Activated T-helper 1 cell treated with anti-CD3 and anti-CD28 coated beads, Interleukin-12 subunit alpha, Interleukin-12 subunit beta, Interleukin-2, Interleukin-4 antibody, amounts not matched to agents 30 ng/mL and 10 ng/mL and 1 ng/mL, durations not matched to agents 14 hours and 24 hours and 36 hours (primary cell): ENCODE measurements at regions of chr12 and their contacts with region 1.

Region 1: DNA sequence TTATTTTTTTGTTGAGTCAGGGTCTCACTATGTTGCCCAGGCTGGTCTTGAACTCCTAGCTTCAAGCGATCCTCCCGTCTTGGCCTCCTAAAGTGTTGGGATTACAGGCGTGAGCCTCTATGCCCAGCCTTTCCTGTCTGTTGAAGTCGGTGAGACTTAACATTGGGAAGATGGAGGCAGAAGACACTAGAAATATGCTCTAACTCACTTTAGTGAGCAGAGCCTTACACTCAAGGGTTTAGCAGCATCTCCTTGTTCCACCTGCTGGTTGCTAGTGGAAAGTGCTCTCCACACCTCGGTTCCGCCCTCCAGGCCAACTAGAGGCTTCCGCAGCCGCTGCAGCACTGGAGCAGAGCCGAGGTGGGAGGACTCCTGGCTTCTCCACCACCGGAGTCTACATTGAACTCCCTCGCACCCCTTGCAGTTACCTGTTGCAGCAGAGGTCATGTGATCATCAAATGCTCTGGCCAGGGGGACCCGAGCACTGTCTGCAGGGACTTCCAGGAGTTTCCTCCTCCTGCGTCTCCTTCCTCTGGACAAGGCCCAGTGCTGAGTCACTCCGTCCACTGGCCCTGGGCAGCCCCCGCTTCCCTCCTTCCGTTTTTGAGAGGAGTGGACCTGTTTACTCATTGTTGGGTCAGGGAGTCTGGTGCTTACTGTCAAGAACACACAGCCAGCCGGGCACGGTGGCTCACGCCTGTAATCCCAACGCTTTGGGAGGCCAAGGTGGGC is 9.4 kb upstream of the HVCN1 start:
- DNase-seq: peak; percentile 78
- H3K4me3 Mint-ChIP-seq: no peak overlapping the region
- H3K27ac Mint-ChIP-seq: peak overlapping the region; percentile 85
- H3K4me1 Mint-ChIP-seq: peaks cover 19% of the 10 kb centered on the region
- H3K27me3 Mint-ChIP-seq: peaks cover 2% of the 10 kb centered on the region

Region 2: DNA sequence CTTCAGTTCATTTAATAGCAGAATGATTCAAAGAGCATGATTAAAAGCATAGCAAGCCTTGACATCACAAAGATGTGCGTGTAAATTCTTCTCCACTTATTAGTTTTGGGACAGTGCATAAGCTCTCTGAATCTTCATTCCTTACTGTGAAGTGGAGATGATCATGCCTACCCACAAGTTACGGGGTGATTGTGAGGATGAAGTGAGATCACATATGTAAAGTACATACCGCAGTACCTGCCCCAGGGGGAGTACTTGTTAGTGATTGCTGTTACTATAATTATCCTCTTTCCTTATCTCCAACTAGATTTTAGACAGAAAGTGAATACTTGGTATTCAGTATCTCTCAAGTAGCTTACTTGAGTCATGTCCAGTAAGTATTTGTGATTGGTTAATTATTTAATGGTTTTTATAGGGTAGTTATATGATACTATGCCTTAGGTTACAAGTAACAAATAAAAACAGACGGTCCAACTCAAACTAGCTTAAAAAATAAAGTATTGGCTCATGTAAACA is 190.2 kb before region 1 on chr12:
- intact Hi-C with region 1: loop called (anchors 1 kb)
- DNase-seq: no peak
- H3K4me3 Mint-ChIP-seq: no peak overlapping the region
- H3K27ac Mint-ChIP-seq: no peak overlapping the region
- H3K4me1 Mint-ChIP-seq: no peaks in the 10 kb centered on the region
- H3K27me3 Mint-ChIP-seq: peaks cover 15% of the 10 kb centered on the region

Region 3: GRCh38 chr12:110600254-110600653 is 98.1 kb before region 1 on chr12:
- intact Hi-C with region 1: loop called (anchors 1 kb)
- DNase-seq: no peak
- H3K4me3 Mint-ChIP-seq: no peak overlapping the region
- H3K27ac Mint-ChIP-seq: no peak overlapping the region
- H3K4me1 Mint-ChIP-seq: peaks cover 12% of the 10 kb centered on the region
- H3K27me3 Mint-ChIP-seq: no peaks in the 10 kb centered on the region

Region 4: GRCh38 chr12:110619534-110619953 is 78.8 kb before region 1 on chr12:
- intact Hi-C with region 1: loop called (anchors 1 kb)
- DNase-seq: no peak
- H3K4me3 Mint-ChIP-seq: peak overlapping the region; percentile 37
- H3K27ac Mint-ChIP-seq: peak overlapping the region; percentile 77
- H3K4me1 Mint-ChIP-seq: peaks cover 10% of the 10 kb centered on the region
- H3K27me3 Mint-ChIP-seq: peaks cover 4% of the 10 kb centered on the region